CD4-positive, alpha-beta T cell (primary cell): ENCODE measurements at regions of chr2 and their contacts with region 1.

Region 1: GRCh38 chr2:84694088-84694622 is 177.9 kb downstream of the DNAH6 start:
- DNase-seq: peak in 12 of 14 experiments; percentile 1 to 83 (median 20)
- ATAC-seq: peak; percentile 91
- H3K4me3 ChIP-seq: peak overlapping the region; percentile 15
- H3K4me3 Mint-ChIP-seq: peak overlapping the region; percentile 49
- H3K27ac ChIP-seq: peak overlapping the region; percentile 30 to 70
- H3K27ac Mint-ChIP-seq: peak overlapping the region; percentile 81
- H3K4me1 ChIP-seq: peaks cover 15% of the 10 kb centered on the region
- H3K4me1 Mint-ChIP-seq: peaks cover 63% of the 10 kb centered on the region
- H3K27me3 ChIP-seq: no peaks in the 10 kb centered on the region
- H3K27me3 Mint-ChIP-seq: no peaks in the 10 kb centered on the region
- CTCF ChIP-seq: no peak

Region 2: GRCh38 chr2:84705858-84706257 is 11.7 kb after region 1 on chr2:
- CTCF ChIA-PET with region 1: no interaction called
- POLR2A ChIA-PET with region 1: interaction called, 12 read pairs
- intact Hi-C with region 1: no loop called
- DNase-seq: peak in 2 of 14 experiments; percentile 13 to 21
- ATAC-seq: peak; percentile 64
- H3K4me3 ChIP-seq: no peak overlapping the region
- H3K4me3 Mint-ChIP-seq: no peak overlapping the region
- H3K27ac ChIP-seq: no peak overlapping the region
- H3K27ac Mint-ChIP-seq: peak overlapping the region; percentile 8
- H3K4me1 ChIP-seq: no peaks in the 10 kb centered on the region
- H3K4me1 Mint-ChIP-seq: peaks cover 52% of the 10 kb centered on the region
- H3K27me3 ChIP-seq: no peaks in the 10 kb centered on the region
- H3K27me3 Mint-ChIP-seq: no peaks in the 10 kb centered on the region
- CTCF ChIP-seq: no peak

Region 3: DNA sequence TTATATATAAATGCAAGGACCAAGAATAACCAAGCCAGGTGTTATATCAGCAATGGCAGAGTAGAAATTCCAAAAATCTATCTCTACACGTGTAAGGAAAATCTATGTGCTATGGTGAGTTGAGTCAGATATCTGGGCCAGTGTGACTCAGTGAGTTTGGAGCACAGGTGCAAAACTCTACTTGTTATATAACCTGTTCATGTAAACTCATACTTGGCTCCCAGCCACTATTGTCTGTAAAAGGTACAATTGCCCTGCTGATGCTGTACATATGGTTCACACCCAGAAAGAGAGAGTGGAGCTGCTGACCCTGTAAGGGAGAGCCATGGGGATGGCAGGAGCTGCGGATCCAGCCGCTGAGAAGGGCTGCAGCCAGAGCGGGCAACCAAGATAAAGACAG is 74.7 kb after region 1 on chr2:
- CTCF ChIA-PET with region 1: no interaction called
- POLR2A ChIA-PET with region 1: no interaction called
- intact Hi-C with region 1: no loop called
- DNase-seq: no peak
- ATAC-seq: no peak
- H3K4me3 ChIP-seq: no peak overlapping the region
- H3K4me3 Mint-ChIP-seq: no peak overlapping the region
- H3K27ac ChIP-seq: no peak overlapping the region
- H3K27ac Mint-ChIP-seq: no peak overlapping the region
- H3K4me1 ChIP-seq: no peaks in the 10 kb centered on the region
- H3K4me1 Mint-ChIP-seq: peaks cover 18% of the 10 kb centered on the region
- H3K27me3 ChIP-seq: no peaks in the 10 kb centered on the region
- H3K27me3 Mint-ChIP-seq: no peaks in the 10 kb centered on the region
- CTCF ChIP-seq: no peak

Region 4: DNA sequence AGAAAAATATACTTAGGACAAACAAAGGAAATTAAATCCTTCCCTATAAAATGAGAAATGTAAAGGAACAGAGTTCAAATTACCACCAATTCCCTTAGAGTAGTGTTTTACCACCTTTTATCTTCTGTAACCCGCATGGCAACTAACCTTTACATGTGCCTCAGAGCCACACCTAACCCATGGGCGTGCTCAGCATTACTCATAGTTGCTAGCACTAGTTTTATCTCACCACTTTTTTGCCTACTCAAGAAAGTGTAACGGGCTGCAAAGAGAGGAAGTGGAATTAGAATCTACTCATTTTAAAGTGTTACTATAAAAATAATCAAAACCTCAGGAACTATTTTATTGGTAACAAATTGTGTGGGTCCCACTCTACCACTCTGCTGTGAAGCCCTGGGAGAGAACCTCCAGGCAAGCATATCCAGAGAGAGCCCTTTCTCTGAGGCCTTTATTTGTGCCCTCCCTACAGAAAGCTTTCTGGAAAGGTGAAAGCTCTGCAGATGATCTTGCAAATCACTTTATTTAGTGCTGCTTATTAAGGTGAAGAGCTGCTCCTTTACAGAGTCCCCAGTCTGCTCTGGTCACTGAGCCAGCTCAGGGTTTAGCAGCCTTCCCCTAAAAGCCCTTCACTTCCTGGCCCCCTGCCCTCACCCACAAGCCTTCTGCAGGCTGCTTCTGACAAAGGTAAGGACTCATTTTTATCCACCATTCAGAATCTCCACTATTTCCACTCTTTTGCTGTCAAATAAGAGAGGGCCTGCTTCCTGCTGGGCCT is 88.0 kb after region 1 on chr2:
- CTCF ChIA-PET with region 1: no interaction called
- POLR2A ChIA-PET with region 1: no interaction called
- intact Hi-C with region 1: loop called in 1 of 2 experiments (anchors 2 kb)
- DNase-seq: peak; percentile 25 to 91 (median 57)
- ATAC-seq: peak; percentile 83
- H3K4me3 ChIP-seq: no peak overlapping the region
- H3K4me3 Mint-ChIP-seq: peak overlapping the region; percentile 81
- H3K27ac ChIP-seq: peak overlapping the region; percentile 67 to 70
- H3K27ac Mint-ChIP-seq: peak overlapping the region; percentile 90
- H3K4me1 ChIP-seq: peaks cover 47% of the 10 kb centered on the region
- H3K4me1 Mint-ChIP-seq: peaks cover 93% of the 10 kb centered on the region
- H3K27me3 ChIP-seq: no peaks in the 10 kb centered on the region
- H3K27me3 Mint-ChIP-seq: no peaks in the 10 kb centered on the region
- CTCF ChIP-seq: no peak

Region 5: DNA sequence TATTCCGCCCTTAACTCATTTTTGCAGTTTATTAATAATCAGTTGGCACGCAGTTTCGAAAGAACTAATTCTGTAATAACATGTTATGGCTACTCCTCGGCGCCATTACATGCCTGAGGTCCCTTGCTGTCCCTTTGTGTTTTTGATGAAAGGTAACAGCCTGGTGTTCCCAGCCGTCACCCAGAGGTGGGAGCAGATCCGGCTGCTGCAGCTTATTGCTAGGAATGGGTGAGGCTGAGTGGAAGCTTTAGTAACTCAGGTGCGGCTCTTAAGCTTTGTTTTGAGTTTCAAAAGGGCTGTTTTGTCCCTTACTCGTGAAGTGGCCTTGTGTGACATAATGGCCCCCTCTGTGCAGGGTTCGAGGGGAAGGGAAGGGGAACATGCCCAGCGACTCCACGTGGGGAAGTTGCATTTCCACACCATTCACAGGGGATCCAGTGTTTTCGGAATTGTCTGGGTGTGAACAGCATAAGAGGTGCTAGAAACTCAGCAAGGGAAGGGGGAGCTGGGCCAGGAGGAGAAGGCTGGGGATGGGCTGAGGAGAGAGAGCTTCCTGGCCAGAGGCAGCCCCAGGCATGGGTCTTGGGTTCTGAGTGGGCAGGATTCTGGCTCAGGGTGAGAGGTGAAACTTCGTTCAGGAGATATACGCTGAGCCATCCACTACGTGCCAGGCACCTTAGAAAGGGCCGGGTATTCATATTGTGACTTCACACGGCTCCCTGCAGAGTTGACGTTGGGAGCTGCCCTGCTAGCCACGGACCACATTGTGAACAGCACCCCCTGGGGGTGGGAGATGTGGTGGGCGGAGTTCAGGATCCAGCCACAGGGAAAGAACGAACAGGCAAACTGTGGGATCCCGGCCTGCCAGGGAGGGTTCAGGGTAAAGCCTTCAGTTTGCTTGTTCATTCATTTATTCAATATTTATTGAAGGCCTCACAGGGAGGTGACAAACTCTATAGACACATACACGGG is 549.2 kb after region 1 on chr2:
- CTCF ChIA-PET with region 1: no interaction called
- POLR2A ChIA-PET with region 1: no interaction called
- intact Hi-C with region 1: no loop called
- DNase-seq: peak in 4 of 14 experiments; percentile 7 to 37 (median 24)
- ATAC-seq: no peak
- H3K4me3 ChIP-seq: no peak overlapping the region
- H3K4me3 Mint-ChIP-seq: no peak overlapping the region
- H3K27ac ChIP-seq: no peak overlapping the region
- H3K27ac Mint-ChIP-seq: no peak overlapping the region
- H3K4me1 ChIP-seq: no peaks in the 10 kb centered on the region
- H3K4me1 Mint-ChIP-seq: peaks cover 4% of the 10 kb centered on the region
- H3K27me3 ChIP-seq: no peaks in the 10 kb centered on the region
- H3K27me3 Mint-ChIP-seq: peaks cover 20% of the 10 kb centered on the region
- CTCF ChIP-seq: no peak